ENCODE measurements at regions of chr5 and their contacts with region 1.

Region 1: GRCh38 chr5:23457780-23458179 is 49.6 kb upstream of the PRDM9 start:
- DNase-seq: peak; percentile 24
- ATAC-seq: peak; percentile 85
- H3K4me3 ChIP-seq: no peak overlapping the region
- H3K27ac ChIP-seq: no peak overlapping the region
- H3K4me1 ChIP-seq: no peaks in the 10 kb centered on the region
- H3K27me3 ChIP-seq: no peaks in the 10 kb centered on the region
- CTCF ChIP-seq: no peak
- EP300 ChIP-seq: peak; percentile 74 to 88; a peak in 3 of 4 replicates
- POLR2A ChIP-seq: no peak
- RAD21 ChIP-seq: no peak

Region 2: GRCh38 chr5:22754155-22754554 is 703.6 kb before region 1 on chr5:
- CTCF ChIA-PET with region 1: no interaction called
- POLR2A ChIA-PET with region 1: no interaction called
- RAD21 ChIA-PET with region 1: no interaction called
- SMC1A ChIA-PET with region 1: no interaction called
- in situ Hi-C with region 1: no loop called
- intact Hi-C with region 1: no loop called
- DNase-seq: no peak
- ATAC-seq: no peak
- H3K4me3 ChIP-seq: no peak overlapping the region
- H3K27ac ChIP-seq: no peak overlapping the region
- H3K4me1 ChIP-seq: no peaks in the 10 kb centered on the region
- H3K27me3 ChIP-seq: no peaks in the 10 kb centered on the region
- CTCF ChIP-seq: no peak
- EP300 ChIP-seq: no peak
- POLR2A ChIP-seq: no peak
- RAD21 ChIP-seq: no peak

Region 3: GRCh38 chr5:23412044-23412443 is 45.7 kb before region 1 on chr5:
- CTCF ChIA-PET with region 1: no interaction called
- POLR2A ChIA-PET with region 1: interaction called, 3 read pairs
- RAD21 ChIA-PET with region 1: interaction called, 5 read pairs
- SMC1A ChIA-PET with region 1: interaction called, 3 read pairs
- in situ Hi-C with region 1: no loop called
- intact Hi-C with region 1: loop called (anchors 2 kb)
- DNase-seq: no peak
- ATAC-seq: peak; percentile 59
- H3K4me3 ChIP-seq: no peak overlapping the region
- H3K27ac ChIP-seq: no peak overlapping the region
- H3K4me1 ChIP-seq: no peaks in the 10 kb centered on the region
- H3K27me3 ChIP-seq: no peaks in the 10 kb centered on the region
- CTCF ChIP-seq: no peak
- EP300 ChIP-seq: no peak
- POLR2A ChIP-seq: no peak
- RAD21 ChIP-seq: no peak

Region 4: GRCh38 chr5:23446436-23446835 is 11.3 kb before region 1 on chr5:
- CTCF ChIA-PET with region 1: interaction called, 5 read pairs
- POLR2A ChIA-PET with region 1: no interaction called
- RAD21 ChIA-PET with region 1: no interaction called
- SMC1A ChIA-PET with region 1: interaction called, 12 read pairs
- in situ Hi-C with region 1: no loop called
- intact Hi-C with region 1: no loop called
- DNase-seq: no peak
- ATAC-seq: no peak
- H3K4me3 ChIP-seq: no peak overlapping the region
- H3K27ac ChIP-seq: no peak overlapping the region
- H3K4me1 ChIP-seq: no peaks in the 10 kb centered on the region
- H3K27me3 ChIP-seq: no peaks in the 10 kb centered on the region
- CTCF ChIP-seq: no peak
- EP300 ChIP-seq: no peak
- POLR2A ChIP-seq: no peak
- RAD21 ChIP-seq: no peak

Region 5: GRCh38 chr5:23482642-23483041 is 24.9 kb after region 1 on chr5:
- CTCF ChIA-PET with region 1: no interaction called
- POLR2A ChIA-PET with region 1: no interaction called
- RAD21 ChIA-PET with region 1: no interaction called
- SMC1A ChIA-PET with region 1: no interaction called
- in situ Hi-C with region 1: no loop called
- intact Hi-C with region 1: no loop called
- DNase-seq: no peak
- ATAC-seq: no peak
- H3K4me3 ChIP-seq: no peak overlapping the region
- H3K27ac ChIP-seq: no peak overlapping the region
- H3K4me1 ChIP-seq: no peaks in the 10 kb centered on the region
- H3K27me3 ChIP-seq: no peaks in the 10 kb centered on the region
- CTCF ChIP-seq: no peak
- EP300 ChIP-seq: no peak
- POLR2A ChIP-seq: no peak
- RAD21 ChIP-seq: no peak

Measured in GM12878 (cell line).